H1 (cell line): ENCODE measurements at regions of chr13 and their contacts with region 1.

Region 1: DNA sequence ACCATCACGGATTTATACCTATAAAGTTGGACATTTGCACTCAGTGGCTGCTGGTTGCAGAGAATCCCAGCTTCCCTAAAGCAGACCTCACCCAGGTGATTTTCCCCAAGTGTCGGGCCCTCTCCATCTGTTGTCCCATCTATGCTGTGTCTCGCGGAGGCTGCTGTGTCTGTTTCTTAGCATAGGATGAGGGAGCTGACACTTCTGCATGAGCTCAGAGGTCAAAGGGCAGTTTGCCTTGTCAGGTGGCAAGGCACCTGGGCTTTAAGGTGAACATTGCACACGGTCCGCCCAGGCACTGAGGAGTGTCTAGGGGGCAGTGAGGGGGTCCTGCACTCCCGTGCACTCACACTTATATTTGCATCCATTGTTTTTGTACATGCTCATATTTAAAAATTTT is 151.6 kb downstream of the ZIC5 start:
- DNase-seq: no peak
- H3K4me3 ChIP-seq: no peak overlapping the region
- H3K27ac ChIP-seq: no peak overlapping the region
- H3K4me1 ChIP-seq: peaks cover 0 to 13% (median 10%) of the 10 kb centered on the region in 4 experiments; a peak in 5 of 7 replicates
- H3K27me3 ChIP-seq: no peaks in the 10 kb centered on the region
- CTCF ChIP-seq: no peak
- EP300 ChIP-seq: no peak
- POLR2A ChIP-seq: no peak
- RAD21 ChIP-seq: no peak

Region 2: GRCh38 chr13:99830931-99831330 is 11.0 kb after region 1 on chr13:
- CTCF ChIA-PET with region 1: interaction called, 17 read pairs
- POLR2A ChIA-PET with region 1: interaction called, 3 read pairs
- DNase-seq: peak in 1 of 2 experiments; percentile 25
- H3K4me3 ChIP-seq: no peak overlapping the region
- H3K27ac ChIP-seq: no peak overlapping the region
- H3K4me1 ChIP-seq: peaks cover 0 to 4% (median 0%) of the 10 kb centered on the region in 4 experiments; a peak in 3 of 7 replicates
- H3K27me3 ChIP-seq: no peaks in the 10 kb centered on the region
- CTCF ChIP-seq: peak; percentile 49 to 86 (median 68)
- EP300 ChIP-seq: no peak
- POLR2A ChIP-seq: no peak
- RAD21 ChIP-seq: peak; percentile 59 to 72

Region 3: DNA sequence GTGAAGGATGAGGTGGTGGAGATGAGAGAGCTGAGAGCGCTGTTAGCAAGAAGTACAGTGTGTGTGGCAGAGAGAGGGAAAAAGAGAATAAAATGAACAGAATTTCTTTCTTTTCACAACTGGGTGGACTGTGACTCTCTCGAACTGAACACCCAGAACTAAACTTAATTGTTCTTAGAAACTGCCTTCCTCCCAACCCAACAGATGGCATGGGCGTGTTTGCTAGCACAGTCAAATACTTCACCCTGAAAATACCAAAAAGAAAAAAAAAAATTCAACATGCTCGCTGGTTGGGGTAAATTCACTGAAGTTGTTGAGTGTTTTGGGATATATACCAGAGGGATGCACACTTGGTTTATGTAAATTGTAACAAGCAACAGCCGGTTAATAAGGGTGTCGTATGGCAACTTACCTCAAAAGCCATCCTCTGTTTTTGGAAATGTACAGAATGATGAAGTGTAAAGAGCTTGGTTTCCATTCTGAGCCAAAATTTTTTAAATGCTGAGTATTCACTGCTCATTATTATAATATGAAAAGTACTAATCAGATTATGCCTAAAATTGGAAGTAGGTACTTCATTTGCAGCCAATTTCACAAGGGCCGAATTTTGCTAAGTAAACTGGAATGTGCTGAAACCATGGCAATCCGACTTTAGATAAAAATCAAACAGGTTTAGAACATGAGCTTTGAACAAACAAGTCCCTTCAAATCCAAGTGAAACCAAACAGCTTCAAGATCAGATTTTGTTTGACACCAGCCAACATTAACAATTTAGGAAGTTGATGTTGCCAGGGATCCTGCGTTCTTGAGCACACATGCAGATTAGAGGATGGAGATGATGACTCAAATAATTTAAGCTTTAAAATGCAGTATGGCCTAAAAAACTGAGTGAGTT is 35.8 kb after region 1 on chr13:
- CTCF ChIA-PET with region 1: no interaction called
- POLR2A ChIA-PET with region 1: no interaction called
- DNase-seq: no peak
- H3K4me3 ChIP-seq: no peak overlapping the region
- H3K27ac ChIP-seq: no peak overlapping the region
- H3K4me1 ChIP-seq: peaks cover 2 to 25% (median 15%) of the 10 kb centered on the region in 4 experiments
- H3K27me3 ChIP-seq: no peaks in the 10 kb centered on the region
- CTCF ChIP-seq: no peak
- EP300 ChIP-seq: no peak
- POLR2A ChIP-seq: no peak
- RAD21 ChIP-seq: no peak